ENCODE measurements at regions of chr4 and their contacts with region 1.

Region 1: GRCh38 chr4:75724066-75724866 is at the start of gene USO1:
- DNase-seq: peak; percentile 98
- H3K4me3 ChIP-seq: peak within 1 kb of the TSS; percentile 62 to 96 (median 86)
- H3K27ac ChIP-seq: peak within 1 kb of the TSS; percentile 92 to 98 (median 96)
- H3K4me1 ChIP-seq: peaks cover 23 to 30% of the 10 kb centered on the region in 2 donors
- H3K27me3 ChIP-seq: no peaks in the 10 kb centered on the region
- CTCF ChIP-seq: peak; percentile 50 to 94 (median 72)
- POLR2A ChIP-seq: peak; percentile 96
- total RNA-seq, gene USO1: 97.2 to 102 (median 100) TPM

Region 2: DNA sequence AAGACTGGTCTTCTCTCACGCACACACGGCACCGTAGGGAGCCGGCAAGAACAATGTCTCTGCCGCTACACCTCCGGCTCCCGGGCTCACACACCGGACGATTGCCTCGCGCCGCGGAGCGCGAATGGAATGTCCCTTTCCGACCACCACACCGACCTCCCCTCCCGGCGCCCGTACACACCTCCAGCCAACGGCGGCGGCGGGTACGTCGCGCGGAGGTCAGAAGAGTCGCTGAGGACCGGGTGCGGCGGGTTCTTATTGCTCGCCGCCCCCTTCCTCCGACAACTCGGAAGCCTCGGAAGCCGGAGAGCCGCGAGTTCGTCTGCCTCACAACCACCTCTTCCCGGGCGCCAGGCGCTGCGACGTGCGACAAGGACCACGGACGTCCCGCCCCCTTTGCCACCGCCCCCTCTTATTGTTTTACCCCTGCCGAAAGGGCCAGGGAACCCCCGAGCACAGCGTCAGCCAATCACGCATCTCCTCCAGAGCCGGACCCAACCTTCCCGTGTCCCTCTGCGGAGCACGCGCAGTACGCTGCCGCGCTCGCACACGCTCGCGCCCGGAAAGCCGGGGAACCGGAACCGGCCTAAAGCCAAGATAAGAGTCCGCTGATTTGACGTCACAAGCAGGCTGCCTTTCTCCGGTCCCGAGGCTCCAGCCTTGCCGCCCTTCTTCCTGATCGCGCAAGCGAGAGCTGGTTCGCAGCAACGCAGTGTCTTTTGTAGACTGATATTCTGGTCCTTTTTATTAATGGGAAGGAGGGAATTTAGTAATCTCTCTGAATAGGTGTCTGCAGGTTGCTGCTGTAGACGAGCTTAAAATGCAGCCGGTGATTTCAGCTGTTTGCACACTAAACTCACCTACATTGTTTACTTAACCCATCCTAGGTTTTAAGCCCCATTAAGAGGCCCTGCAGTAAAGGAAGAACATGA is 51.0 kb before region 1 on chr4 and contains the start of gene G3BP2:
- intact Hi-C with region 1: loop called (anchors 5 kb)
- DNase-seq: peak; percentile 99
- H3K4me3 ChIP-seq: peak within 1 kb of the TSS; percentile 87 to 89 (median 88)
- H3K27ac ChIP-seq: peak within 1 kb of the TSS; percentile 92 to 96 (median 95)
- H3K4me1 ChIP-seq: peaks cover 14 to 26% of the 10 kb centered on the region in 2 donors
- H3K27me3 ChIP-seq: no peaks in the 10 kb centered on the region
- CTCF ChIP-seq: no peak
- POLR2A ChIP-seq: peak; percentile 54 to 98
- total RNA-seq, gene G3BP2: 117 to 179 (median 139) TPM